H1 (cell line): ENCODE measurements at regions of chr3 and their contacts with region 1.

Region 1: GRCh38 chr3:46909535-46910442 is 32.3 kb downstream of the PTH1R start:
- DNase-seq: peak; percentile 65 to 95
- H3K4me3 ChIP-seq: no peak overlapping the region
- H3K27ac ChIP-seq: no peak overlapping the region
- H3K4me1 ChIP-seq: peaks cover 0 to 3% (median 1%) of the 10 kb centered on the region in 4 experiments; a peak in 2 of 7 replicates
- H3K27me3 ChIP-seq: no peaks in the 10 kb centered on the region; a peak in 2 of 7 replicates
- CTCF ChIP-seq: peak in 2 of 3 experiments; percentile 88 to 97; a peak in 3 of 4 replicates
- EP300 ChIP-seq: no peak
- POLR2A ChIP-seq: no peak
- RAD21 ChIP-seq: peak; percentile 97 to 98

Region 2: DNA sequence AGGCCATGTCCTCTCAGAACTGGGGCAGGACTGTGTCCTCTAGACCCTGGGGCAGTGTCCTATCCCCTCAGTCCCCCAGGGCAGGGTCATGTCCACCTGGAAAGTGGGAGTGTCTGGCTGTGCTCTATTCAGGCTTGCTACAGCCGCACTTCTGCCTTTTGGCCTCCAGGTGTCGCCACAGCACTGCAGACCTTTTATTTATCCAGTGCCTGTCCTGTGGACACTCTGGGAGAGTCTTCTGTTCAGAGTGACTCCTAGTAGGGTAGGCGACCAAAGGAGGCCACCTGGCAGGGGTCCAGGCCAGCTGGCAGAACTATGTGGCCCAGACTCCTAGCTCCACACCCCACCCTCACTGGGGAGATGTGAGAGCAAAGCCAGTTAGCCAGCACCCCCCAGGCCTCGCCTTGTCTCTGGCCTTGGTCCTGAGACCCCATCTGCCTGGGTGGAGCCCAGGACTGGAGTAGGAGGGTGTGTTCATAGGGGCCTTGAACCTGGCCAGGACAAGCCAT is 204.7 kb before region 1 on chr3:
- CTCF ChIA-PET with region 1: interaction called, 24 read pairs
- POLR2A ChIA-PET with region 1: interaction called, 4 read pairs
- DNase-seq: peak in 1 of 2 experiments; percentile 88
- H3K4me3 ChIP-seq: no peak overlapping the region
- H3K27ac ChIP-seq: no peak overlapping the region
- H3K4me1 ChIP-seq: peaks cover 0 to 9% (median 2%) of the 10 kb centered on the region in 4 experiments; a peak in 4 of 7 replicates
- H3K27me3 ChIP-seq: peaks cover 2 to 21% (median 19%) of the 10 kb centered on the region in 4 experiments; a peak in 6 of 7 replicates
- CTCF ChIP-seq: peak in 2 of 3 experiments; percentile 90 to 97; a peak in 3 of 4 replicates
- EP300 ChIP-seq: no peak
- POLR2A ChIP-seq: no peak
- RAD21 ChIP-seq: peak; percentile 97 to 98

Region 3: DNA sequence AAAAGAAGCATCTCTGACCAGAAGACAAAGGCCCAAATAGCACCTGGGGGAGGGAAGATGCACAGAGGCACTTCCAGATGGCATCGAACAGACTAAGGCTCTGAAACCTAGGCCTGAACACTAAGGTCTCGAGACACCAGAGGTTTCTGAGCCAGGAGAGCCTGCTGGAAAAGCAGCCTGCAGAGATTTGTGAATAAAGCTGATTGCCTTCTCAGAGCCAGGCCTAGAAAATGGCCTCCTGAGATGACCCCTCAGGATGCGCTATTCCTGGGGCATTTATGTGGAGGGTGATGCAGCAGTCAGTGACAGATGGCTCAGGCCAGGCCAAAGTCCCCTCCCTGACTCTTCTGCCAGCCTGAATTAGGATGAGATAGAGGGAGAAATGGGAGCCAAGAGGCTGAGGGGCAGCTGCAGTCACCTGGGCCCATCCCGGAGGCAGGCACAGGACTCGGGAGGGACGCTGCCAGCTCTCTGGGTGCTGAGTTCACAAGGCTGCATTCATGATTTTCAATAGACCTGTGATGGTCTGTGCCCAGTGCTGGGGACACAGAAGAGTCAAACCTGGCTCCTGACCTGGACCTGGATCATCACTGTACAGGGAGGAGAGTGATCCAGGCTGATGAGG is 199.0 kb before region 1 on chr3:
- CTCF ChIA-PET with region 1: interaction called, 24 read pairs
- POLR2A ChIA-PET with region 1: no interaction called
- DNase-seq: no peak
- H3K4me3 ChIP-seq: no peak overlapping the region
- H3K27ac ChIP-seq: no peak overlapping the region
- H3K4me1 ChIP-seq: peaks cover 0 to 6% (median 0%) of the 10 kb centered on the region in 4 experiments; a peak in 1 of 7 replicates
- H3K27me3 ChIP-seq: no peaks in the 10 kb centered on the region; a peak in 2 of 7 replicates
- CTCF ChIP-seq: no peak
- EP300 ChIP-seq: no peak
- POLR2A ChIP-seq: no peak
- RAD21 ChIP-seq: no peak

Region 4: GRCh38 chr3:46851364-46852333 is 58.1 kb before region 1 on chr3:
- CTCF ChIA-PET with region 1: interaction called, 12 read pairs
- POLR2A ChIA-PET with region 1: interaction called, 4 read pairs
- DNase-seq: peak in 1 of 2 experiments; percentile 36
- H3K4me3 ChIP-seq: no peak overlapping the region
- H3K27ac ChIP-seq: no peak overlapping the region
- H3K4me1 ChIP-seq: no peaks in the 10 kb centered on the region; a peak in 3 of 7 replicates
- H3K27me3 ChIP-seq: peaks cover 0 to 6% (median 2%) of the 10 kb centered on the region in 4 experiments; a peak in 4 of 7 replicates
- CTCF ChIP-seq: no peak
- EP300 ChIP-seq: no peak
- POLR2A ChIP-seq: no peak
- RAD21 ChIP-seq: no peak

Region 5: DNA sequence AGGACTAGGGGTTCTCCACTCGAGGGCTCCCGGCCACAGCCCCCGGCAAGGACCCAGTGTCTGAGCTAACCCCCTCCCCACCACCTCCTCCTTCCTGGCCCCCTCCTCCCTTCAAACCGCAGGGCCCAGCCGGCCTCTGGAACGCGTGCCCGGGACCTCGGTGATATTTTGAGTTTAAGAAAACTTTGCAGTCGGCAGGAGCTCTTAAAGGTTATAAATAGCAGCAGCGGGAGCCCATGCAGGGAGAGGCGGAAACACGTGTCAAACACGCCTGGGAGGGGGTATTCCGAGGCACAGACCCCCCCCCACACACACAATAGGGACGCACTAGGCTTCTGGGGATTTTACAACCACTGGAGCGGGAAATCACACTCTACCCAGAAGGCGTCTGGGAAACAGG is 35.4 kb before region 1 on chr3:
- CTCF ChIA-PET with region 1: interaction called, 10 read pairs
- POLR2A ChIA-PET with region 1: interaction called, 3 read pairs
- DNase-seq: no peak
- H3K4me3 ChIP-seq: no peak overlapping the region
- H3K27ac ChIP-seq: no peak overlapping the region
- H3K4me1 ChIP-seq: peaks cover 0 to 9% (median 0%) of the 10 kb centered on the region in 4 experiments; a peak in 2 of 7 replicates
- H3K27me3 ChIP-seq: peaks cover 3 to 49% (median 36%) of the 10 kb centered on the region in 4 experiments
- CTCF ChIP-seq: no peak
- EP300 ChIP-seq: no peak
- POLR2A ChIP-seq: no peak
- RAD21 ChIP-seq: no peak

Region 6: GRCh38 chr3:46998121-46998851 is 88.5 kb after region 1 on chr3:
- CTCF ChIA-PET with region 1: interaction called, 10 read pairs
- POLR2A ChIA-PET with region 1: no interaction called
- DNase-seq: peak; percentile 74 to 96
- H3K4me3 ChIP-seq: no peak overlapping the region
- H3K27ac ChIP-seq: no peak overlapping the region; the same call in 1 of the 2 replicates
- H3K4me1 ChIP-seq: peaks cover 0 to 3% (median 1%) of the 10 kb centered on the region in 4 experiments; a peak in 3 of 7 replicates
- H3K27me3 ChIP-seq: no peaks in the 10 kb centered on the region
- CTCF ChIP-seq: peak in 2 of 3 experiments; percentile 97 to 98; a peak in 3 of 4 replicates
- EP300 ChIP-seq: no peak
- POLR2A ChIP-seq: no peak
- RAD21 ChIP-seq: peak; percentile 86 to 96